ENCODE measurements at regions of chr12 and their contacts with region 1.

Region 1: DNA sequence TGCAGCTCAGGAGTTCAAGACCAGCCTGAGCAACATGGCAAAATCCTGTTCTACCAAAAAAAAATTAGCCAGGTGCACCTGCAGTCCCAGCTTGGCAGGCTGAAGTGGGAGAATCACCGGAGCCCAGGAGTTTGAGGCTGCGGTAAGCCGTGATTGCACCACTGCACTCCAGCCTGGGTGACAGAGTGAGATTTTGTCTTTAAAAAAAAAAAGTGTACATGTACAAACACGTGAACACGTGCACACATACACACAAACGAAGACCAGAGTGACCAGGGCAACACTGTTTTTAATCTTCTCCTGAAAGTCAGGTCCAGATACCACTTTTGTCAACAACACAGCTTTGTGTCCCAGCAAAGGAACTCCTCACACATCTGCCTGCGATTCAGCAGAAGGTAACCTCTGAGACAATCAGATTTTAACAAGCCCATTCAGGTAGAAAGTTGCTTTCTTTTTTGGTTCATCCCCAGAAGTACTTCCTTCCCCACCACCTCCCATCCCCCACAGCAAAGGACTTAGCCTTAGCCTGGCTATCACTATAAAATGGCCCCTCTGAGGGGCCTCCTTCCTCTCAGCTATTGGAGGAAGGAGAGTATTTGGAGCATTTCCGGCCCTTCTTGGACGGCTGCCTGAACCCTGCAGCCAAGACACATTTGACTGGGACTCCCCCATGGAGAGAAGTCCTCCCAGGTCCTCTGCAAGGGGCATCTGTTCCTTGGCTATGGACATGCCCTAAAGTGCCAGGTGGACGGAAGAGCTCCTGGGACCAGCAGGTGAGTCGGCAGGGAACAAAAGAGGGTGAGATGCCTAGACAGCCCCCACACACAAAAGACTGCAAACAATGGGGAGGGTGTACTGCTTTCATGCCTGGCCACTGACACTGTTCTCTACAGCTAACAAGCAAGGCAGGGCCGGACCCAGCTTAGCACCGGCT is 9.8 kb downstream of the CTDSP2 start:
- DNase-seq: peak; percentile 85
- ATAC-seq: peak; percentile 75

Region 2: GRCh38 chr12:56098592-56098991 is 1738.1 kb before region 1 on chr12:
- intact Hi-C with region 1: loop called (anchors 10 kb)
- DNase-seq: no peak
- ATAC-seq: no peak

Region 3: GRCh38 chr12:57151741-57152630 is 684.7 kb before region 1 on chr12:
- intact Hi-C with region 1: no loop called
- DNase-seq: peak; percentile 84
- ATAC-seq: peak; percentile 81

Region 4: DNA sequence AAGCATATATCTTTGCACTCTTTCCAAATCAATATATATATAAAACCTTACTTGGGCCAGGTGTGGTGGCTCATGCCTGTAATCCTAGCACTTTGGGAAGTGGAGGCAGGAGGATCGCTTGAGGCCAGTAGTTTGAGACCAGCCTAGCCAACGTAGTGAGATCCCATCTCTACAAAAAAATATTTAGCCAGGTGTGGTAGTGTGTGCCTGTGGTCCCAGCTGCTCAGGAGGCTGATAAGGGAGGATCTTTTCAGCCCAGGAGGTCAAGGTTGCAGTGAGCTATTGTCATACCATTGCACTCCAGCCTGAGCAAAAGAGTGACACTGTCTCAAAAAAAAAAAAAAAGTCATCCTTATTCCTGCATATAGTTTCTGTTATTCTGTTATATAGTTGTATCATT is 128.4 kb before region 1 on chr12:
- intact Hi-C with region 1: no loop called
- DNase-seq: no peak
- ATAC-seq: no peak

Region 5: GRCh38 chr12:57904848-57905811 is 68.4 kb after region 1 on chr12:
- intact Hi-C with region 1: loop called (anchors 5 kb)
- DNase-seq: peak; percentile 91
- ATAC-seq: peak; percentile 92

Region 6: DNA sequence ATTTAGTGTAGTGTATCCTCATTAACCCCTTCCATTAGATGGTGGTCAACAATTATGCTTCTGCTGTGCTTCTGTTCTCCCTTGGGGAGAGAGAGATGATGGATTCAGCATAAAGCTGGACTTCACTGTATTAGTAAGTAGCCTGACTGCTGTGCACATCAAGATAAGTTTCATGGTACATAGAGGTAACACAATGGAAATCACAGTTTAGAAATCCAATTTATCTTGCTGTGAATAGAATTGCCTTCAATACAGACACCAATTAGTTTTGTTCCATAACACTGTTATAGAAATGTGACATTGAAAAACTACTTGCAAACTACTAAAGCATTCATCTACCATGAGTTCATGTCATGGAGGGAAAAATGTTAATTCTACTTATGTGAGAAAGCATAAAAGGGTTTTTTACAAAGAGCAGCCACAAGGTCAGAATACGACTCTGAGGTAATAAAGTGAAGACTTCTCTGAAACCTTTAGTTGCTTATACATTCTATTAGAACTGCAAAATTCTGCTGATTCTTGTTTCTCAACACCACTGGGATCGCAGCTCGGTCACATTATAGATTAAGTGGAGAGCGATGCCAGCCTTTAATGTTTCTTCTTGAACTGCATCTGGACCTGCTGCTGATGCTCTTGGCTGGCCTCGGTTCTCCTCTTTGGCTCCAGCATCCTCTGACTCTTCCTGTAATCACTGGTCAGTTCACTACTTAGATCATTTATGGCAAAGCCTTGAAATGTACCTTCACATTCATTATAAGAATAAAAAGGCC is 295.5 kb after region 1 on chr12:
- intact Hi-C with region 1: no loop called
- DNase-seq: no peak
- ATAC-seq: no peak

Region 7: GRCh38 chr12:58283553-58283952 is 446.8 kb after region 1 on chr12:
- intact Hi-C with region 1: no loop called
- DNase-seq: no peak
- ATAC-seq: no peak